ENCODE measurements at regions of chr1 and their contacts with region 1.

Region 1: GRCh38 chr1:167542109-167543032 is 11.2 kb downstream of the CREG1 start:
- DNase-seq: no peak
- H3K4me3 Mint-ChIP-seq: no peak overlapping the region
- H3K27ac Mint-ChIP-seq: no peak overlapping the region
- H3K4me1 Mint-ChIP-seq: peaks cover 34% of the 10 kb centered on the region
- H3K27me3 Mint-ChIP-seq: no peaks in the 10 kb centered on the region

Region 2: GRCh38 chr1:167401260-167401873 is 141.0 kb before region 1 on chr1:
- CTCF ChIA-PET with region 1: interaction called, 23 read pairs
- intact Hi-C with region 1: loop called (anchors 1 kb)
- DNase-seq: peak; percentile 70
- H3K4me3 Mint-ChIP-seq: no peak overlapping the region
- H3K27ac Mint-ChIP-seq: no peak overlapping the region
- H3K4me1 Mint-ChIP-seq: no peaks in the 10 kb centered on the region
- H3K27me3 Mint-ChIP-seq: no peaks in the 10 kb centered on the region

Region 3: DNA sequence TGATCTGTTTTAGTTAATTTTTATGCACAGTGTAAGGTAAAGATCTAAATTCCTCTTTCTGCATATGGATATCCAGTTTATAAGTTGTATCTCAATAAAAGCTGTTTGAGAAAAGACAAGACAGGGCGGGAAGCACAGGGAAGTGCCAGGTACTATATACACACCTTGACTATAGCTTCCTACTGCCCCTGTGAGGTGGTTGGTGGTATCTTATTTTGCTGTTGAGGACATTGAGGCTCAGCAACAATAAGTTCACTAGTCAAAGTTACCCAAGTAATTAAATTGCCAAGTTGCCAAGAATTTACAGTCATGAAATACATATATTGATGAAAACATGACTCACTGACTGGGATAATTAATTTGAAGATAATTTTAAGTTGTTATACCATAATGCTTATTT is 133.2 kb before region 1 on chr1:
- CTCF ChIA-PET with region 1: interaction called, 10 read pairs
- intact Hi-C with region 1: no loop called
- DNase-seq: no peak
- H3K4me3 Mint-ChIP-seq: no peak overlapping the region
- H3K27ac Mint-ChIP-seq: no peak overlapping the region
- H3K4me1 Mint-ChIP-seq: peaks cover 15% of the 10 kb centered on the region
- H3K27me3 Mint-ChIP-seq: no peaks in the 10 kb centered on the region

Region 4: GRCh38 chr1:167423684-167424619 is 118.4 kb before region 1 on chr1:
- CTCF ChIA-PET with region 1: interaction called, 11 read pairs
- intact Hi-C with region 1: no loop called
- DNase-seq: no peak
- H3K4me3 Mint-ChIP-seq: no peak overlapping the region
- H3K27ac Mint-ChIP-seq: no peak overlapping the region
- H3K4me1 Mint-ChIP-seq: peaks cover 22% of the 10 kb centered on the region
- H3K27me3 Mint-ChIP-seq: no peaks in the 10 kb centered on the region

Region 5: GRCh38 chr1:167797015-167797414 is 254.6 kb after region 1 on chr1:
- CTCF ChIA-PET with region 1: no interaction called
- intact Hi-C with region 1: no loop called
- DNase-seq: peak; percentile 61
- H3K4me3 Mint-ChIP-seq: no peak overlapping the region
- H3K27ac Mint-ChIP-seq: no peak overlapping the region
- H3K4me1 Mint-ChIP-seq: peaks cover 14% of the 10 kb centered on the region
- H3K27me3 Mint-ChIP-seq: no peaks in the 10 kb centered on the region